ENCODE measurements at regions of chr4 and their contacts with region 1.

Region 1: GRCh38 chr4:139656614-139657486 is 8.8 kb upstream of the MGST2 start:
- DNase-seq: peak; percentile 76
- H3K4me3 ChIP-seq: peak overlapping the region in 1 of 3 experiments; percentile 30
- H3K27ac ChIP-seq: peak overlapping the region; percentile 94
- H3K4me1 ChIP-seq: peaks cover 45% of the 10 kb centered on the region
- H3K27me3 ChIP-seq: no peaks in the 10 kb centered on the region
- CTCF ChIP-seq: peak; percentile 83 to 86
- POLR2A ChIP-seq: no peak

Region 2: DNA sequence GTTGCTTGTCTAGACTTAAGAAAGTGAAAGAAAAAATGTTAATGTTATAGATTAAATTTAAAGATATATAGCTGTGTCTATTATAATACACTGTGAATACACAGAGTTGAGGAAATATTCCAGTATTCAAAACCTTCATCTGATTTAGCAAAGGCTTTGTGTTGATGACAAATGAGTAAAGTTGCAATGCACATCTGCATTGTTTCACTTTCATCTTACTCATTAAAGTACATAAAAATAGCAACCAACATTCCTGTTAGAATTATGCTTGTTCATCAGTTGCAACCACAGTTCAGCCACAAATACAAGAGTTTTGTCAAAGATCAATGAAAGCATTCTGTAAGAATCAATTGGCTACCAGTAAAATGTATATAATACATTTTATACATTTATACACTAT is 1068.3 kb before region 1 on chr4:
- CTCF ChIA-PET with region 1: no interaction called
- POLR2A ChIA-PET with region 1: no interaction called
- dilution Hi-C with region 1: no loop called
- intact Hi-C with region 1: no loop called
- DNase-seq: no peak
- H3K4me3 ChIP-seq: no peak overlapping the region
- H3K27ac ChIP-seq: no peak overlapping the region
- H3K4me1 ChIP-seq: no peaks in the 10 kb centered on the region
- H3K27me3 ChIP-seq: peaks cover 0 to 9% of the 10 kb centered on the region in 2 experiments
- CTCF ChIP-seq: no peak
- POLR2A ChIP-seq: no peak

Region 3: DNA sequence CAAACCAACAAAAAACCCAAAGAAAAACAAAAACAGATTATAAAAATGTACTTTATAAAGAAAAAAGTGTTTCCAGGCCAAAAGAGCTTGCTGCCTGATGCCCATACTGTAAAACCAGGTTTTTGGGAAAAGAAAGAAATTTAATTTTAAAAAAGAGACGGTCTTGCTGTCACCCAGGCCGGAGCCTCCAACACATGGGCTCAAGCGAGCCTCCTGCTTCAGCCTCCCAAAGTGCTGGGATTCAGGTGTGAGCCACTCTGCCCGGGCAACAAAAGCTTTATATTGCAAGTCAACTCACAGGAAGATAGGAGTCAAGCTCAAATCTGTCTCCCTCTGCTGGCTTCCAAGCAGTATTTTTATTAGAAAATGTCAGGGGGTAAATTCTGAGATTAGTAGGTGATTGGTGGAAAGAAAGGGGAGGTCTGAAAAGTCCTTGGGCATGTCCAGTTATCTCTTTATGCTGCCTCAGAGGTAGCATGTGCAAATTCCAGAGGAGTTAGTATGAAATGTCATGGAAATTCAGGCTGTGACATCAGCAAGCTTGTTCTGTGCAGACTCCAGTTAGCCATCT is 48.1 kb after region 1 on chr4:
- CTCF ChIA-PET with region 1: interaction called, 51 read pairs
- POLR2A ChIA-PET with region 1: no interaction called
- dilution Hi-C with region 1: no loop called
- intact Hi-C with region 1: loop called (anchors 1 kb)
- DNase-seq: peak; percentile 15
- H3K4me3 ChIP-seq: no peak overlapping the region
- H3K27ac ChIP-seq: no peak overlapping the region
- H3K4me1 ChIP-seq: no peaks in the 10 kb centered on the region
- H3K27me3 ChIP-seq: no peaks in the 10 kb centered on the region
- CTCF ChIP-seq: peak; percentile 19 to 38
- POLR2A ChIP-seq: no peak

Region 4: GRCh38 chr4:139734875-139735380 is 78.1 kb after region 1 on chr4:
- CTCF ChIA-PET with region 1: interaction called, 16 read pairs
- POLR2A ChIA-PET with region 1: no interaction called
- dilution Hi-C with region 1: no loop called
- intact Hi-C with region 1: loop called (anchors 1 kb)
- DNase-seq: peak; percentile 94
- H3K4me3 ChIP-seq: peak overlapping the region in 2 of 3 experiments; percentile 18 to 34
- H3K27ac ChIP-seq: peak overlapping the region; percentile 14
- H3K4me1 ChIP-seq: peaks cover 12% of the 10 kb centered on the region
- H3K27me3 ChIP-seq: no peaks in the 10 kb centered on the region
- CTCF ChIP-seq: peak; percentile 66 to 88
- POLR2A ChIP-seq: no peak

Region 5: DNA sequence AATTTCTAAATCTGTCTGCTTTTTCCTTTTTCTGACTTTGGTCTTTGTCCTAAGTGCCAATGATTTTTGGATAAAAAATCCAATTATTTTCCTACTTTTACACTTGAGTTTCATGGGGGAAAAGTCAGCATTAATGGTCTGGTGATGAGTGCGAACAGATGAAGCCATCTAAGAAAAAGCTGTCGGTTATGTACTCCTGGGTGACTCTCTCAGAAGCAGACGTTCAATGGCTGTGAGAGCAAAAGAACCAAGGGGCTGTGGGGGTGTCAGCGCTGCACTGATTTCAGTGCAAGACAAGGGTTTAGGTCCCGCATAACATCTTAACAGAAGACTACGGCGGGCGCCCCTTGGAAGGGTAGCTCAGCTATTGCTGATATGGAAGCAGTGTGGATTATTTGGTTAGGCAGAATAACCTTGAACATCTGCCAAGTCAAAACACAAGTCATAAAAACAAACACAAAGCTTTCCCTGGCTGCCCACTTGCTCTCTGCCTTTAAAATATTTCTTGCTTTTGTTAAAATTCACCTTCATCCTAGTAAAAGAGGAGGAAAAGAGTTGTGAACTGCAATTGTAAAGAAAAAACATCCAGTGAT is 256.6 kb after region 1 on chr4:
- CTCF ChIA-PET with region 1: interaction called, 3 read pairs
- POLR2A ChIA-PET with region 1: no interaction called
- dilution Hi-C with region 1: no loop called
- intact Hi-C with region 1: loop called (anchors 2 kb)
- DNase-seq: peak; percentile 84
- H3K4me3 ChIP-seq: no peak overlapping the region
- H3K27ac ChIP-seq: peak overlapping the region; percentile 31
- H3K4me1 ChIP-seq: peaks cover 26% of the 10 kb centered on the region
- H3K27me3 ChIP-seq: no peaks in the 10 kb centered on the region
- CTCF ChIP-seq: no peak
- POLR2A ChIP-seq: no peak

Region 6: DNA sequence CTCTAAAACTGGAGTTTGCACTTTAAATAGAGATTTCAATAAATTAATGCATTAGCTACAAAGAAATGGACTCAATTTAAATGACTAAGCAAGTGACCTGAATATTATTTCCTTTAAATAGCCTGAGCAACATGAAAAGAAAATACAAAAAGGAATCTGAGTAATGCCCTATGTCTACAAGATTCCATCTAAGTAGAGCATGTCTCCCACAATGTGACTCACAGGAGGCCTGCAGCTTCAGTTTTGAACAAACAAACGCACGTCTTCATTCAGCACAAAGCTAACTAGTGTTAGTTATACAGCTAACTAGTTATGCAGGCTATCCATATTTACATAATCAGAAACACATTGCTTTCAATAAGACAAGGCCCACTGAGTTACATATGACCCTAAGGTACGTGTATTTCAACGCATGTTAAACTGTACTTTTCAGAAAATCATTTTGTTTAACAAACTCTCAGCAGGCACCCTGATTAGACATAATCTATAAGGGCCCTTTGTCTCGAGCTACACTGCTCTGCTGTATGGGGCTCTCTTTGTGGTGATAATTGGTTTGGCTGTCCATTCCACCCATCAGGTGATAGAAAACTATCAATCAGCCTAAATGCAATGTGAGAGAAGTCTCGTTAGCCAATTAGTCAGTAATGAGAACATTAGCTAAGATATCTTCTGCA is 380.6 kb after region 1 on chr4:
- CTCF ChIA-PET with region 1: no interaction called
- POLR2A ChIA-PET with region 1: no interaction called
- dilution Hi-C with region 1: no loop called
- intact Hi-C with region 1: no loop called
- DNase-seq: peak; percentile 93
- H3K4me3 ChIP-seq: peak overlapping the region in 1 of 3 experiments; percentile 45
- H3K27ac ChIP-seq: peak overlapping the region; percentile 99
- H3K4me1 ChIP-seq: peaks cover 29% of the 10 kb centered on the region
- H3K27me3 ChIP-seq: no peaks in the 10 kb centered on the region
- CTCF ChIP-seq: no peak
- POLR2A ChIP-seq: peak; percentile 41

Region 7: GRCh38 chr4:140049024-140049848 is 392.4 kb after region 1 on chr4:
- CTCF ChIA-PET with region 1: interaction called, 5 read pairs
- POLR2A ChIA-PET with region 1: no interaction called
- dilution Hi-C with region 1: no loop called
- intact Hi-C with region 1: loop called (anchors 2 kb)
- DNase-seq: peak; percentile 85
- H3K4me3 ChIP-seq: peak overlapping the region; percentile 0 to 24 (median 5)
- H3K27ac ChIP-seq: peak overlapping the region; percentile 80
- H3K4me1 ChIP-seq: peaks cover 49% of the 10 kb centered on the region
- H3K27me3 ChIP-seq: no peaks in the 10 kb centered on the region
- CTCF ChIP-seq: no peak
- POLR2A ChIP-seq: no peak

Region 8: GRCh38 chr4:140609548-140610425 is 952.9 kb after region 1 on chr4:
- CTCF ChIA-PET with region 1: interaction called, 5 read pairs
- POLR2A ChIA-PET with region 1: no interaction called
- dilution Hi-C with region 1: no loop called
- intact Hi-C with region 1: loop called (anchors 5 kb)
- DNase-seq: peak; percentile 75
- H3K4me3 ChIP-seq: no peak overlapping the region
- H3K27ac ChIP-seq: no peak overlapping the region
- H3K4me1 ChIP-seq: peaks cover 3% of the 10 kb centered on the region
- H3K27me3 ChIP-seq: peaks cover 0 to 11% of the 10 kb centered on the region in 2 experiments
- CTCF ChIP-seq: peak; percentile 20 to 36
- POLR2A ChIP-seq: no peak